Dorsolateral prefrontal cortex (tissue), 120 donors: ENCODE measurements at regions of chr17 and their contacts with region 1.

Region 1: DNA sequence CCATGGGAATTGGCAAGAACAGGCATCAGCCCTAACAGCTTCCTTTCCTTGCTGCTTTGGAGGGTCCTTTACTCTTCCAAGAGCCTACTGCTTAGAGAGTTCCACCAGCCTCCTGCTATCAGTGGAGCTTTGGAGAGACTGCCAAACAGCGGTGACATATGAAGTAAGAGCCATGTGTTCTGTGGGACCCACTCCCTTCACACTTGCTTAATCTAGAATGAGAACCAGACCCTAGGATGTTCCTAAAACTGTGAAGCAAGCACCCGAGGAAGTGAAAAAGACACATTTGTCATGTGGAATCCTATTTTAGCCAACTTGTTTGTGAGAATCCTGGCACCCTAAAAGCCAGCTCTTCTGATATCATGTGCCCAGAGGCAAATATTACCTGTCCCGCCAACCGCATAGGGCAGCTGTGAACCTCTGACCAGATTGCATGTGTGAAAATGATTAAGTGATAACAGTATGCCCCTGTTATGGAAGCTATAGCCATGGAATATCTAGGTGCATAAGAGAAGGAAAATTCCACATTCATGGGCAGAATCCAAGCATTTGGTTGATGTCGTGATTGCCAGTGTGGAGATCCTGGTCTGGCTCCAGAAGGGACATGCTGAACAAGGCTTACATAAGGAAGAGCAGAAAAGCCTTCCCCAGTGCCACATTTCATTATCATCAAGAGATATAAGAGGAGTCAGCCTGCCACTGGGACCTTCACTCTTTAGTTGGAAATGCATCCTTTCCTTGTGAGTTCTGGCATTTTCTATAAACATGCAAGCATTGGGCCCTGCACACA is 18.7 kb downstream of the RCVRN start:
- DNase-seq: peak in 3 of 10 donors; percentile 19 to 70 (median 48)
- H3K4me3 ChIP-seq: no peak overlapping the region
- H3K27ac ChIP-seq: peak overlapping the region in 58 of 59 donors; percentile 29 to 94 (median 82)
- H3K27me3 ChIP-seq: no peaks in the 10 kb centered on the region
- CTCF ChIP-seq: no peak

Region 2: DNA sequence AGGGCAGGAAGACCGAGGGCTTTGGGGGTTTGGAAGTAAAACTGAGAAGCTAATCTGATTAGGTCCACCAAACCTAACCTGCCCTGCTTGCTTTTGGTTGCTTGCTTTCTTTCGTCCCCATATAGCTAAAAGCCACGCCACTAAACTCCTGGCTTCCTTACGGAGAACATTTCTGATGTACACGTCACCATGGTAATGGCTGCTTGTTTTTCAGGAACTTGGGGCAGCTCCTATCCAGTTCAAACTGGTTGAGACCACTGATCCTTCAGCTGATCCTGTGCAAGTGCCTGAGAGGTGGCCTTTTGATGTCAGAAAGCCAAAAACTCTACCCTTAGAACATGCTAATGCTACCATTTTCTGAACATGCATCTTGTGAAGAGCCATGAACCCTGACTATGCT is 80.6 kb before region 1 on chr17:
- intact Hi-C with region 1: loop called in 1 of 2 experiments (anchors 5 kb)
- DNase-seq: no peak
- H3K4me3 ChIP-seq: no peak overlapping the region
- H3K27ac ChIP-seq: peak overlapping the region in 57 of 59 donors; percentile 5 to 90 (median 73)
- H3K27me3 ChIP-seq: peaks cover 0 to 5% (median 0%) of the 10 kb centered on the region in 45 donors
- CTCF ChIP-seq: no peak

Region 3: DNA sequence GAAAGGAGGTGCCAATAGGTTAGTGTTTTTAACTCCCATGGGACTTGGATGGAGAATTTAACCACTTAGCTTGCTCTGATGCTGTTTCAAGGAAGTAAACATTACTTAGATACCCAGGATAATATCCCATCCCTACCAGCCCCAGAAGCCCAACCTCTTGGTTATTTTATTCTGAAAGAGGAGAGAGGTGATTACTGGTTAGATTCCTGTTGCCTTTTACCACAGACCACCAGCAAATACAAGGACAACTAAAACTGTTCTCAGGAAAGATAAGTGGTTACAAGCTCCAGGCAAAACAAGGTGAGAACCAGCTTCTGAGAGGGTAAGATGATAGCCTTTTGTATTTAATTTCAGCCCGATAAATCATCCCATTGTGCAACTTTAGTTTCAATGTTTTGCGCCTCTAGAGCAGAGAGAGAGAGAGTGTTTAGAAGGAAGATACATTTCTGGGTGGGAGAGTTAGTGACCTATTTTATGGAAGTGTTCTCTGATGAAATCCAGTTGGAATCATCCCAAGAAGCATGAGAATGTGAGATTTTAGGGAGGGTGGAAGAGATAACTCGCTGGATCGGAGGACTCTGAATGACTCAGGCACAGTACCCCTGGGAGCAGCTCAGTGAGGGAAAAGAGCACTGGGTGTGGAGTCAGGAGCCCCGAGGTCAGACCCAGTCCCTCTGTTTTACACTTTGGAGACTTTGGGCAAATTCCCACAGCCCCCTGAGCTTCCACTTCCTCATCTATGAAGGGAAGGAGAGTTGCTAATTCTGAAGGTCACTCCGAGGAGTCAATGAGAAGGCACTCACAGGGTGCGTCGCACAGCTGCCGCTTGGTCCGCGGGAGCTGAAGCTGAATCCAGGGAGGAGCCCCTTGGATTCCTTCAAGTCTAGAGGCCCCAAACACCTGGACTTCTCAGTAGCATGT is 48.5 kb before region 1 on chr17:
- intact Hi-C with region 1: no loop called
- DNase-seq: no peak
- H3K4me3 ChIP-seq: no peak overlapping the region
- H3K27ac ChIP-seq: peak overlapping the region in 11 of 59 donors; percentile 0 to 46 (median 29)
- H3K27me3 ChIP-seq: peaks cover 0 to 3% (median 0%) of the 10 kb centered on the region in 45 donors
- CTCF ChIP-seq: no peak

Region 4: DNA sequence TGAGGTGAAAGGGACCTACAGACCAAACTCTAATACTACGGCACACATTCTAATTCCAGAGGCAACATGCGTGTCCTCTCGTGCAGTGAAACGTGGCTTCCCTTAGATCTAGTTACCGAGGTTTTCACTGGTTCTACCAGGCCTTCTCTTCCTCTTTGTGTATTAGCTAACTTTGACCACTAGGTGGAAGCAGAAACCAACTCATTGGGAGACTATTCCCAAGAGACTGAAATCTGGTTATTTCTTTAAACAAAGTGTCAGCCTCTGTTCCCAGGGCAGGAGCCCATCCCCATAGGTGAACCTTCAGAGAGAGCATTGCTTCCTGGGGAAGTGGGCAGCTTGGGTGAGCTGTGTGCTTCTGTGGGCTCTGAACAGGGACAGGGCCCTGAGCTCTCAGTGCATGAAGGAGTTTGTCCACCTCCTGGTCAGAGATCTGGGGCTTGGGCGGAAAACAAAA is 38.4 kb after region 1 on chr17:
- intact Hi-C with region 1: no loop called
- DNase-seq: no peak
- H3K4me3 ChIP-seq: no peak overlapping the region
- H3K27ac ChIP-seq: peak overlapping the region in 46 of 59 donors; percentile 2 to 77 (median 54)
- H3K27me3 ChIP-seq: no peaks in the 10 kb centered on the region
- CTCF ChIP-seq: peak; percentile 67 to 97 (median 90)